ENCODE measurements at regions of chr14 and their contacts with region 1.

Region 1: DNA sequence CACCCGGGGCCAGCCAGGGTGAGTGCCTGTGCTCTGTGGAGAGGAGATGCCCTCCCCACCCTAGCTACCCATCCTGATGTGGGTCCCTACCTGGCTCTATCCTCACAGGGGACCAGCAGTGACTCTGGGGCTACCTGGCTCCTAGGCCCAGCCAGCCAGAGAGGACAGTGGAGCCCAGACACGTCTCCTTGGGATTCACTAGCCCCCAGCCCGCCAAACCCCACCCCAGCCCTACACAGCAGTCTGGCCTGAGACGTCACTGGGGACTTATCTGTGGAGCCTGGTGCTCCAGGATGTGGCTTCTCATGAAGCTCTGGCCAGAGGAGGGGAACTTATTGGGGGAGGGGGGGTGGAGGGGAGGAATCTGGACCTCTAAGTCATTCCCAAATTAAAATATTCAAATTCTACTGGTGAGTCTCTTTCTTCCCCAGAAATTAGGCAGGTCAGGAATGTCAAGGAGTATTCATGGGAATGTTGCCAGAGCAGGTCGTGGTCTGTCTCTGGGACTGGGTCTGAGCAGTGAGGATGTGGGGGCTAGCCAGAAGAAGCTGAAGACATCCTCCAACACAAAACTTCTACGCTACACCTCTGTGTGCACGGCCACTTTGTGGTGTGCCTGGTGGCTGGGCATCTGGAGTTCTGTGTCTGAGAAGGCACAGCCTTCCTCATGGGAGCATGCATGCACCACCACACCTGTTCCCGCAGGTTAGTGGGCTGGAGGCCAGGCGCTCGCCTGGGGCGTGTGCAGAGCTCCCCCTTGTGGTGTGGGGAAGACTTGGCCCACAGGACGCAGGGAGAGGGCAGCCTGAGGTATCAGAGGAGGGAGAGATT is 2.7 kb downstream of the CMTM5 start:
- DNase-seq: peak; percentile 32 to 92 (median 64)
- ATAC-seq: peak; percentile 98
- H3K4me3 ChIP-seq: no peak overlapping the region
- H3K27ac ChIP-seq: no peak overlapping the region
- H3K4me1 ChIP-seq: no peaks in the 10 kb centered on the region
- H3K27me3 ChIP-seq: peaks cover 0 to 36% of the 10 kb centered on the region in 2 donors
- CTCF ChIP-seq: peak; percentile 76 to 90

Region 2: GRCh38 chr14:23320774-23321571 is 58.6 kb before region 1 on chr14 and contains the start of gene PABPN1:
- intact Hi-C with region 1: loop called in 1 of 2 experiments (anchors 10 kb)
- DNase-seq: peak; percentile 95 to 100 (median 100)
- ATAC-seq: peak; percentile 94
- H3K4me3 ChIP-seq: peak within 1 kb of the TSS; percentile 79 to 90
- H3K27ac ChIP-seq: peak within 1 kb of the TSS; percentile 97
- H3K4me1 ChIP-seq: peaks cover 13 to 23% of the 10 kb centered on the region in 2 donors
- H3K27me3 ChIP-seq: no peaks in the 10 kb centered on the region
- CTCF ChIP-seq: no peak
- polyA plus RNA-seq, gene PABPN1: 187 to 256 (median 214) TPM